Sciatic nerve (tissue), 2 donors: ENCODE measurements at regions of chr15 and their contacts with region 1.

Region 1: DNA sequence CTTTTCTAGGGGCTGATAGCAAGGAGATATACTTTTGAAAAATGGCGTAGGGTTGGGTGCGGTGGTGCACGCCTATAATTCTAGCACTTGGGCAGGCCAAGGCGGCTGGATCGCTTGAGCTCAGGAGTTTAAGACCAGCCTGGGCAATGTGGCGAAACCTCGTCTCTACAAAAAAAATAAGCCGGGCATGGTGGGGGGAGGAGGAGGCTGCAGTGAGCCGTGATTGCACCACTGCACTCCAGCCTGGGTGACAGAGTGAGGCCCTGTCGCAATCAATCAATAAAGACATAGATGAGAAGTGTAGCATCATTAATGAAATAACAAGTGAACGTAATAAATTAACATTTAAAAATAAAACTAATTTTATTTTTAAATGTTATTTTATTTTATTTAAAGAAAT is 134.6 kb downstream of the SLCO3A1 start:
- DNase-seq: no peak
- ATAC-seq: no peak

Region 2: GRCh38 chr15:91710067-91710698 is 277.9 kb before region 1 on chr15:
- intact Hi-C with region 1: no loop called
- DNase-seq: no peak
- ATAC-seq: no peak

Region 3: GRCh38 chr15:91759560-91759959 is 228.5 kb before region 1 on chr15:
- intact Hi-C with region 1: no loop called
- DNase-seq: no peak
- ATAC-seq: no peak

Region 4: DNA sequence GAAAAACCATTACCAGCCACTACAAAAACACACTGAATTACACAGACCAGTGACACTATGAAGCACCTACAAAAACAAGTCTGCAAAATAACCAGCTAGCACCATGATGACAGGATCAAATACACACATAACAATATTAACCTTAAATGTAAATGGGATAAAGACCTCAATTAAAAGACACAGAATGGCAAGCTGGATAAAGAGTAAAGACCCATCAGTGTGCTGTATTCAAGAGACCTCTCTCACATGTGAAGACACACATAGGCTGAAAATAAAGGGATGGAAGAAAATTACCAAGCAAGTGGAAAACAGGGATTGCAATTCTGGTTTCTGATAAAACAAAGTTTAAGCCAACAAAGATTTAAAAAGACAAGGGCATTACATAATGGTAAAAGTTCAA is 1760.6 kb after region 1 on chr15:
- intact Hi-C with region 1: loop called (anchors 5 kb)
- DNase-seq: no peak
- ATAC-seq: no peak